AG04450 (cell line): ENCODE measurements at regions of chr2 and their contacts with region 1.

Region 1: GRCh38 chr2:112947374-112947773 is 30.4 kb upstream of the IL36G start:
- DNase-seq: no peak
- H3K4me3 ChIP-seq: no peak overlapping the region
- H3K27ac ChIP-seq: no peak overlapping the region
- H3K27me3 ChIP-seq: peaks cover 24% of the 10 kb centered on the region
- CTCF ChIP-seq: no peak

Region 2: GRCh38 chr2:112958428-112959108 is 11.2 kb after region 1 on chr2:
- CTCF ChIA-PET with region 1: interaction called, 36 read pairs
- POLR2A ChIA-PET with region 1: no interaction called
- DNase-seq: peak; percentile 30
- H3K4me3 ChIP-seq: no peak overlapping the region
- H3K27ac ChIP-seq: no peak overlapping the region
- H3K27me3 ChIP-seq: peaks cover 25% of the 10 kb centered on the region
- CTCF ChIP-seq: peak; percentile 89

Region 3: GRCh38 chr2:113225263-113226259 is 278.2 kb after region 1 on chr2:
- CTCF ChIA-PET with region 1: no interaction called
- POLR2A ChIA-PET with region 1: no interaction called
- DNase-seq: no peak
- H3K4me3 ChIP-seq: no peak overlapping the region
- H3K27ac ChIP-seq: no peak overlapping the region
- H3K27me3 ChIP-seq: no peaks in the 10 kb centered on the region
- CTCF ChIP-seq: no peak